WTC11 (cell line): ENCODE measurements at regions of chr4 and their contacts with region 1.

Region 1: DNA sequence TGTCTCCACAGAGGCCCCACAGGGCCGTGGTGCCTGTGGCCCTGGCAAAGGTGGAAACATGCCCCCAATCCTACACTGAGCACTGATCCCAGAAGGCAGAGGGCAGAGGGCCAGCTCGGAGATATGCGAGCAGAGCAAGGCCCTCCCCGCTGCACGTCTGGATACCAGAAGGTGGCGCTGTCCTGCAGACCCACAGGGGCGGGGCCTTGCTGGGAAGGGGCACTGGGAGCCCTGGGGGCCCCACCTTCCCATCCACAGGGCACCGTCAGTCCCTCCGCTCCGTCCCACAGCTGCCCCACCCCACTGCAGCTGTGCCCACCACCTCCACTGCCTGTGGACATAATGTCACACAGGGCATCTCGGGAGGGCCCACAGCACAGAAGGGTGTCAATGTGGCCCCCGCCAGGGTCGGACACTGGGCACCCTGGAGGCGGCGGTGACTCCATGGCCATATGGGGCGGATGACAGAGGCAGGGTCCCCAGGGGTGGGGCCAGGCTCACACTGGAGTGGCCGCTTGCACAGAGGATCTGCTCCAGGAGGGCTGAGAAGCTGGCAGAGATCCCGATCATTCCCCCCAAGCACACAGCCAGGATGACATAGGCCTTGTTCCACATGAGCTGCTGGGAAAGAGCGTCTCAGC is 4.8 kb downstream of the SLC49A3 start:
- DNase-seq: peak; percentile 89
- ATAC-seq: peak; percentile 61
- H3K4me3 Mint-ChIP-seq: no peak overlapping the region
- H3K27ac Mint-ChIP-seq: no peak overlapping the region
- H3K4me1 Mint-ChIP-seq: peaks cover 9% of the 10 kb centered on the region; the same call in 1 of the 2 replicates
- H3K27me3 Mint-ChIP-seq: no peaks in the 10 kb centered on the region; the same call in 1 of the 2 replicates
- CTCF ChIP-seq: peak; percentile 89

Region 2: GRCh38 chr4:624705-625590 is 59.2 kb before region 1 on chr4 and contains the start of gene PDE6B:
- CTCF ChIA-PET with region 1: interaction called, 10 read pairs
- POLR2A ChIA-PET with region 1: no interaction called
- DNase-seq: peak; percentile 38
- ATAC-seq: peak; percentile 61
- H3K4me3 Mint-ChIP-seq: no peak within 1 kb of the TSS
- H3K27ac Mint-ChIP-seq: no peak within 1 kb of the TSS
- H3K4me1 Mint-ChIP-seq: peaks cover 10% of the 10 kb centered on the region
- H3K27me3 Mint-ChIP-seq: peaks cover 7% of the 10 kb centered on the region; the same call in 1 of the 2 replicates
- CTCF ChIP-seq: no peak
- total RNA-seq, gene PDE6B: 7.1 to 13.1 TPM (median 13.0 TPM) in 3 replicates

Region 3: GRCh38 chr4:705278-706082 is 21.4 kb after region 1 on chr4 and contains the start of gene PCGF3:
- CTCF ChIA-PET with region 1: interaction called, 67 read pairs
- POLR2A ChIA-PET with region 1: no interaction called
- DNase-seq: peak; percentile 99
- ATAC-seq: peak; percentile 97
- H3K4me3 Mint-ChIP-seq: peak within 1 kb of the TSS; percentile 68
- H3K27ac Mint-ChIP-seq: no peak within 1 kb of the TSS
- H3K4me1 Mint-ChIP-seq: peaks cover 10% of the 10 kb centered on the region; the same call in 1 of the 2 replicates
- H3K27me3 Mint-ChIP-seq: peaks cover 18% of the 10 kb centered on the region
- CTCF ChIP-seq: no peak
- total RNA-seq, gene PCGF3: 59.2 to 65.7 TPM (median 62.8 TPM) in 3 replicates

Region 4: GRCh38 chr4:742742-743311 is 58.7 kb after region 1 on chr4:
- CTCF ChIA-PET with region 1: interaction called, 21 read pairs
- POLR2A ChIA-PET with region 1: no interaction called
- DNase-seq: peak; percentile 85
- ATAC-seq: peak; percentile 93
- H3K4me3 Mint-ChIP-seq: no peak overlapping the region
- H3K27ac Mint-ChIP-seq: no peak overlapping the region
- H3K4me1 Mint-ChIP-seq: no peaks in the 10 kb centered on the region
- H3K27me3 Mint-ChIP-seq: no peaks in the 10 kb centered on the region
- CTCF ChIP-seq: peak; percentile 94

Region 5: DNA sequence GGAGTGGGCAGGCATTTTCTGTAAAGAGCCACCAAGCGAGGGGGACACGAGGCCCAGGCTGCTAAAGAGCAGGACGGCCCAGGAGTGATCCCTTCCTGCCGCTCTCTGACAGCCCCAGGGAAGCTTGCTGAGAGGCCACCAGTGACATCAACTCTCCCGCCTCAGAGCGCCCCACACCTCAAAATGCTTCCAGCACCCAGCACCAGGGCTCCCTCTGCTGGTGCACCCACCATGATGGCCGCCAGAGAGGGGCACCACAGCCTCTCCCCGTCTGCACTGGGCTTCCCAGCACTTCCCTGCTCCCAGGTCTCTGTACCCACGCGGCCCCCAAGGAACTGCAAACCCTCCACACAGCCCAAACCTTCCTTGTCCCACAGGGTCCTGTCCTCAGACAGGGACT is 207.6 kb after region 1 on chr4:
- CTCF ChIA-PET with region 1: interaction called, 10 read pairs
- POLR2A ChIA-PET with region 1: no interaction called
- DNase-seq: peak; percentile 74
- ATAC-seq: peak; percentile 80
- H3K4me3 Mint-ChIP-seq: no peak overlapping the region
- H3K27ac Mint-ChIP-seq: no peak overlapping the region
- H3K4me1 Mint-ChIP-seq: no peaks in the 10 kb centered on the region
- H3K27me3 Mint-ChIP-seq: no peaks in the 10 kb centered on the region
- CTCF ChIP-seq: no peak; the same call in 1 of the 2 replicates